Posterior vena cava (tissue), 2 donors: ENCODE measurements at regions of chr9 and their contacts with region 1.

Region 1: DNA sequence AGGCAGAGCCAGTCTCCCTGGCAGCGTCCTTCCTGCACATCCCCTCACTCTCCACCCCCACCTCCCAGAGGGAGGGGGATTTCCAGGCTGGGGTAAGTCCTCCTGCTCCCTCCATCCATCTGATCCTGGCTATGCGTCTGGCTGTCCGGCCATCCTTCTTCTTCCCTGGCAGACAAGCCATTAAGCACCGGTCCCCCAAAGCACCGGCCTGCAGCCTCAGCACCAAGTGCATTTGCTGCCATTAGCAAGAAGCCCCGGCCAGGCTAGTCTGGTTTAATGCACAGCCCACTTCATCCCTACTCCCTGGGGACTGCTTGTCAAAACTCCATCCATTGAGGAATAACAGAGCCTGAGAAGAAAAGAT is 208.7 kb upstream of the IER5L start:
- DNase-seq: no peak

Region 2: DNA sequence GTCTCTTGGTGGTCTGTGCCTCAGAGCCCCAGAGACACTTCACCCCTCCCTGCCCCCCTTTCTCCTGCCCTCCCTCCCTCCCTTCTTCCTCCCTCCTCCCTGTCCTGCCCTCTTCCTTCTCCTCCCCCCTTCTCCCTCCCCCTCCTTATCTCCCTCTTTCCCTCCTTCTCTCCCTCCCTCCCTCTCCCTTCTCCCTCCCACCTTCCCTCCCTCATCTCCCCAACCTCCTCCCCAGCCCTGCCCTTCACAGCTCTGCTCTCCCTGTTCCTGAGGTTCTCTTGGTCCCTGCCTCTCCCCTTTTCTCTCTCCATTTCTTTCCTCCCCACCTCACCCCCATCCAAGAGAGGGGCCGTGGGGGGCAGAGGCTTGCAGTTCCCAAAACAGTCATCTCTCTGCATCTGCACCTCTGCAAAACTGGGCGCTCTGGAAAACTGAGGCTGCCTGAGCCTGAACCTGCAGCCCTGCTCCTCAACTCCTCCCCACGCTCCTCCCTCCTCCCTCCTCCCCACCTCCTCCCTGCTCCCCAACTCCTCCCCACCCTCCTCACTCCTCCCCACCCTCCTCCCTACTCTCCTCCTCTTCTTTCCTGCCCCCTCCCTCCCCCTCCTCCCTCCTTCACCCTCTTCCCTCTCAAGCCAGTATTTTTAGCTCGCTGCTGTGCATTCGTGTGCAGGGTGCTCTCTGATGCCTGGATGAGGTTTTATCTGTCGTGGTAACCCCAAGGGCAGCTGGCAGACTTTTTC is 15.0 kb after region 1 on chr9:
- intact Hi-C with region 1: loop called in 1 of 2 experiments (anchors 2 kb)
- DNase-seq: no peak

Region 3: DNA sequence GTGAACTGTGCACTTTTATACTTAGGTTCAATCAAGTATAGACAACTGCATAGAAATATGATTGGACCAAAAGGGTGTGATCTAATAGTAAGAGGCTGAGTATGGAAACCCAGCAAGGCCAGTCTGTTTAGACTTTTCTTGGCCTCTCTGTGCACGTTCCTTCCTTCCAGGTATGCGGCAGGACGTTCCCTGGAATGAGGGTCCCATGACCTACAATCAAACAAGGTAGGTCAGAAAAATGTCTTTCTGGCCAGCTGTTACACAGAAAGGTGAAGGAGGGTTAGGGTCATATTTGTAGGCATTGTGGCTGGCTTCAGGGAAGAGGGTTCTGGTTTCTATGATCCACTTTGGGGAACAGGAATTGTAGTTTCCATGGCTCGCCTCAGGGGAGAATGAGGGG is 149.2 kb after region 1 on chr9:
- intact Hi-C with region 1: no loop called
- DNase-seq: no peak